ENCODE measurements at regions of chr4 and their contacts with region 1.

Region 1: DNA sequence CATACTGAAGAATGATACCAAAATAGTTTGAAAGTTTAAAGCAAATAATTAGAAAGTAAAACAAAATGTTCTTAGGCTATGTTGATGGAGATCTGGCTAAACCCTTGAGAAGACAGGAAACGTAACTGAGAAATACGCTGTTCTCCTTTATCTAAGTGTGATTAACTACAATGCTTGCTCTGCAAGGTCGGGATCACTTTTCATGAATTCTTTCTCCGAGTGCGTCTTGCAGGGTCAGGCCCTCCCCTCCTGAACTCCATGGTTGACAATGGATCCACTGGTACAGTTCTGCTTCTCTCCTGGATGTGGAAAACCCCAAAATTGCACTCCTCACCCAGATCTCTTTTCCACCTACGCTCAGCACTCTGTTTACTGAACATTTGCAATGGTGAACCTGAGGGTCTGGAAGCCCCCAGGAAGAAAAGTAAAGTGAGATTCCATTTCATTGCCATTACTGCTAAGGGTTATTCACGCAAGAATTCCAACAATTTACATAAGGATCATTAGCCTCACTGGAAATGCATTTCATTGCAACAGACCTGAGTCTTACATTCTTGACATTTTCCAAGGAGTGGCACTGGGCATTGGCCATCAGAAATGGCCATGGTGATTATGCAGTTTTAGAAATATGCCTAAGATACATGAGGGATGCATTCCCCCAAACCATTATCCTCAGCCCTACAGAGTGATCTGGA is 24.6 kb upstream of the WWC2 start:
- DNase-seq: no peak
- ATAC-seq: no peak
- H3K4me3 ChIP-seq: no peak overlapping the region
- H3K4me3 Mint-ChIP-seq: no peak overlapping the region
- H3K27ac ChIP-seq: no peak overlapping the region
- H3K27ac Mint-ChIP-seq: peak overlapping the region in 1 of 9 donors; percentile 18
- H3K4me1 ChIP-seq: no peaks in the 10 kb centered on the region
- H3K4me1 Mint-ChIP-seq: no peaks in the 10 kb centered on the region
- H3K27me3 ChIP-seq: no peaks in the 10 kb centered on the region
- H3K27me3 Mint-ChIP-seq: peaks cover 0 to 16% (median 5%) of the 10 kb centered on the region in 5 donors

Region 2: GRCh38 chr4:182938205-182938645 is 136.2 kb before region 1 on chr4:
- CTCF ChIA-PET with region 1: interaction called, 3 read pairs
- POLR2A ChIA-PET with region 1: no interaction called
- intact Hi-C with region 1: loop called (anchors 1 to 10 kb)
- DNase-seq: peak; percentile 26 to 76 (median 48)
- ATAC-seq: peak; percentile 96
- H3K4me3 ChIP-seq: no peak overlapping the region
- H3K4me3 Mint-ChIP-seq: peak overlapping the region in 1 of 10 donors; percentile 21
- H3K27ac ChIP-seq: no peak overlapping the region
- H3K27ac Mint-ChIP-seq: no peak overlapping the region
- H3K4me1 ChIP-seq: no peaks in the 10 kb centered on the region
- H3K4me1 Mint-ChIP-seq: peaks cover 0 to 4% (median 0%) of the 10 kb centered on the region in 7 donors
- H3K27me3 ChIP-seq: no peaks in the 10 kb centered on the region
- H3K27me3 Mint-ChIP-seq: peaks cover 12 to 27% (median 15%) of the 10 kb centered on the region in 5 donors

Region 3: GRCh38 chr4:183142571-183143550 is 68.4 kb after region 1 on chr4:
- CTCF ChIA-PET with region 1: interaction called, 7 read pairs
- POLR2A ChIA-PET with region 1: no interaction called
- intact Hi-C with region 1: loop called in 1 of 2 experiments (anchors 2 kb)
- DNase-seq: no peak
- ATAC-seq: no peak
- H3K4me3 ChIP-seq: no peak overlapping the region
- H3K4me3 Mint-ChIP-seq: no peak overlapping the region
- H3K27ac ChIP-seq: no peak overlapping the region
- H3K27ac Mint-ChIP-seq: no peak overlapping the region
- H3K4me1 ChIP-seq: no peaks in the 10 kb centered on the region
- H3K4me1 Mint-ChIP-seq: peaks cover 0 to 31% (median 13%) of the 10 kb centered on the region in 7 donors
- H3K27me3 ChIP-seq: no peaks in the 10 kb centered on the region
- H3K27me3 Mint-ChIP-seq: peaks cover 0 to 12% (median 0%) of the 10 kb centered on the region in 5 donors

Region 4: GRCh38 chr4:183256756-183257385 is 182.4 kb after region 1 on chr4:
- CTCF ChIA-PET with region 1: interaction called, 31 read pairs
- POLR2A ChIA-PET with region 1: no interaction called
- intact Hi-C with region 1: loop called (anchors 1 kb)
- DNase-seq: peak in 8 of 9 donors; percentile 5 to 32 (median 20)
- ATAC-seq: peak; percentile 71
- H3K4me3 ChIP-seq: no peak overlapping the region
- H3K4me3 Mint-ChIP-seq: no peak overlapping the region
- H3K27ac ChIP-seq: no peak overlapping the region
- H3K27ac Mint-ChIP-seq: peak overlapping the region in 1 of 9 donors; percentile 6
- H3K4me1 ChIP-seq: peaks cover 0 to under 1% of the 10 kb centered on the region in 2 donors
- H3K4me1 Mint-ChIP-seq: peaks cover 0 to 2% (median under 1%) of the 10 kb centered on the region in 7 donors
- H3K27me3 ChIP-seq: no peaks in the 10 kb centered on the region
- H3K27me3 Mint-ChIP-seq: peaks cover 0 to 4% (median 0%) of the 10 kb centered on the region in 5 donors

Region 5: GRCh38 chr4:183407128-183407585 is 332.7 kb after region 1 on chr4:
- CTCF ChIA-PET with region 1: no interaction called
- POLR2A ChIA-PET with region 1: no interaction called
- intact Hi-C with region 1: loop called in 1 of 2 experiments (anchors 1 kb)
- DNase-seq: peak; percentile 83 to 96 (median 90)
- ATAC-seq: peak; percentile 99
- H3K4me3 ChIP-seq: peak overlapping the region; percentile 78
- H3K4me3 Mint-ChIP-seq: peak overlapping the region; percentile 60 to 88 (median 85)
- H3K27ac ChIP-seq: peak overlapping the region; percentile 72
- H3K27ac Mint-ChIP-seq: peak overlapping the region; percentile 80 to 95 (median 87)
- H3K4me1 ChIP-seq: no peaks in the 10 kb centered on the region
- H3K4me1 Mint-ChIP-seq: peaks cover 5 to 30% (median 17%) of the 10 kb centered on the region in 7 donors
- H3K27me3 ChIP-seq: no peaks in the 10 kb centered on the region
- H3K27me3 Mint-ChIP-seq: peaks cover 0 to 11% (median 0%) of the 10 kb centered on the region in 5 donors